Heart left ventricle (tissue), 16 donors: ENCODE measurements at regions of chr1 and their contacts with region 1.

Region 1: GRCh38 chr1:178465011-178465410 is 31.8 kb downstream of the CLEC20A start:
- DNase-seq: no peak
- ATAC-seq: no peak
- H3K4me3 ChIP-seq: no peak overlapping the region
- H3K27ac ChIP-seq: no peak overlapping the region
- H3K4me1 ChIP-seq: peaks cover 0 to 21% (median 3%) of the 10 kb centered on the region in 12 donors
- H3K27me3 ChIP-seq: no peaks in the 10 kb centered on the region
- CTCF ChIP-seq: no peak
- POLR2A ChIP-seq: no peak

Region 2: GRCh38 chr1:178328728-178329127 is 136.3 kb before region 1 on chr1:
- intact Hi-C with region 1: loop called in 1 of 10 experiments (anchors 5 kb)
- DNase-seq: no peak
- ATAC-seq: peak in 3 of 4 donors; percentile 59 to 85 (median 77)
- H3K4me3 ChIP-seq: no peak overlapping the region
- H3K27ac ChIP-seq: peak overlapping the region in 2 of 12 donors; percentile 6 to 46
- H3K4me1 ChIP-seq: peaks cover 0 to 41% (median 16%) of the 10 kb centered on the region in 12 donors
- H3K27me3 ChIP-seq: no peaks in the 10 kb centered on the region
- CTCF ChIP-seq: no peak
- POLR2A ChIP-seq: no peak

Region 3: DNA sequence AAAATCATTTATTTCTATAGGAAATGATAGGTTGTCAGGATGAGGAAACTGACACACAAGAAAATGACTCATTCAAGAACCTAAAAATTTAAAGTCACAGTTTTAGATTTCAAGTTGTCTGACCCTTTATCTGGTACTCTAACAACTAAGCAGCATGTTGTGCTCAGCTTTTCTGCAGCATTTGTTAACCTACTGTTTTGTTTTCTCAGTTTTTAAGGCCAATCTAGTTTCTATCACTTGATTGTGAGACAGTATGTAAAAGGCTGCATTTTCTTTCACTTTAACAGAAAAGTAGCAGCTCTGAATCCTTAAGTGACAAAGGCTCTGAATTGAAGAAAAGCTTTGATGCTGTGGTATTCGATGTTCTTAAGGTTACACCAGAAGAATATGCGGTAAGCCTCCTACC is 319.1 kb after region 1 on chr1:
- intact Hi-C with region 1: no loop called
- DNase-seq: no peak
- ATAC-seq: no peak
- H3K4me3 ChIP-seq: no peak overlapping the region
- H3K27ac ChIP-seq: no peak overlapping the region
- H3K4me1 ChIP-seq: no peaks in the 10 kb centered on the region
- H3K27me3 ChIP-seq: no peaks in the 10 kb centered on the region
- CTCF ChIP-seq: no peak
- POLR2A ChIP-seq: no peak